Uterus (tissue), 4 donors: ENCODE measurements at regions of chr2 and their contacts with region 1.

Region 1: GRCh38 chr2:48589170-48589767 is 28.4 kb upstream of the GTF2A1L start:
- DNase-seq: peak; percentile 50 to 54
- H3K4me3 ChIP-seq: no peak overlapping the region
- H3K27ac ChIP-seq: peak overlapping the region in 1 of 2 donors; percentile 35
- H3K4me1 ChIP-seq: no peaks in the 10 kb centered on the region
- H3K27me3 ChIP-seq: no peaks in the 10 kb centered on the region
- CTCF ChIP-seq: peak; percentile 65 to 80 (median 69)
- POLR2A ChIP-seq: no peak

Region 2: DNA sequence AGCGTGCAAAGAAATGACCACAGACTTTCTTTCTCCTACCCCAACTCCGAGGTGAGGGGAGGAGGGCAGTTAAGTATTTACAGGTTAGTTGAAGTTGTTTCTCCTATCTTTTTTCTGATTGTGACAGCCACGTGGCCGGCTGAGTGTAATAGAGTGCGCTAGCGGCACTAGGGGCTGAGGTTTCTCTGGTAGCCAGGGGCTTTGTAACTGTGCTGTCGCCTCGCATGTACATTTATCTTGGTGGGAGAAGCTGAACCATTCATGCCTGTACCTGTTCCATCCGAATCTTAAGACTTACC is 273.4 kb before region 1 on chr2:
- intact Hi-C with region 1: no loop called
- DNase-seq: no peak
- H3K4me3 ChIP-seq: peak overlapping the region; percentile 71 to 90
- H3K27ac ChIP-seq: peak overlapping the region; percentile 94 to 95
- H3K4me1 ChIP-seq: peaks cover 0 to 7% of the 10 kb centered on the region in 2 donors
- H3K27me3 ChIP-seq: no peaks in the 10 kb centered on the region
- CTCF ChIP-seq: no peak
- POLR2A ChIP-seq: no peak

Region 3: DNA sequence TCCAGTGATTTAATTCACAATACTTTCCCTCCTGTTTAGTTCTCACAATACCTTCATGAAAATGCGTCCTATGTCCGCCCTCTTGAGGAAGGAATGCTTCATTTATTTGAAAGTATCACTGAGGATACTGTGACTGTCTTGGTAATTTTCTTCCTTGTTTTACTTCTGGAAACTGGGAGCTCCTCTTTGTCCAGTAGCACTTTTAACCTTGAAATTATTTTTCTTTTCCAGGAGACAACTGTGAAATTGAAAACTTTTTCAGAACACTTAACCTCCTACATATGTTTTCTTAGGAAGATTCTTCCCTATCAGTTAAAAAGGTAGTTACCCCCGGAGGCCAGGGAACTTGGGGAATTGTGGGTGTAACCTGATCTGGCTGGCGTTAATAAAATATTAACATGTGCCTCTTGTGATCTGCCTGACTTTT is 118.2 kb before region 1 on chr2:
- intact Hi-C with region 1: loop called (anchors 10 kb)
- DNase-seq: peak in 1 of 2 donors; percentile 40
- H3K4me3 ChIP-seq: no peak overlapping the region
- H3K27ac ChIP-seq: peak overlapping the region; percentile 64 to 73
- H3K4me1 ChIP-seq: peaks cover 8 to 12% of the 10 kb centered on the region in 2 donors
- H3K27me3 ChIP-seq: no peaks in the 10 kb centered on the region
- CTCF ChIP-seq: peak; percentile 68 to 86 (median 74)
- POLR2A ChIP-seq: no peak

Region 4: DNA sequence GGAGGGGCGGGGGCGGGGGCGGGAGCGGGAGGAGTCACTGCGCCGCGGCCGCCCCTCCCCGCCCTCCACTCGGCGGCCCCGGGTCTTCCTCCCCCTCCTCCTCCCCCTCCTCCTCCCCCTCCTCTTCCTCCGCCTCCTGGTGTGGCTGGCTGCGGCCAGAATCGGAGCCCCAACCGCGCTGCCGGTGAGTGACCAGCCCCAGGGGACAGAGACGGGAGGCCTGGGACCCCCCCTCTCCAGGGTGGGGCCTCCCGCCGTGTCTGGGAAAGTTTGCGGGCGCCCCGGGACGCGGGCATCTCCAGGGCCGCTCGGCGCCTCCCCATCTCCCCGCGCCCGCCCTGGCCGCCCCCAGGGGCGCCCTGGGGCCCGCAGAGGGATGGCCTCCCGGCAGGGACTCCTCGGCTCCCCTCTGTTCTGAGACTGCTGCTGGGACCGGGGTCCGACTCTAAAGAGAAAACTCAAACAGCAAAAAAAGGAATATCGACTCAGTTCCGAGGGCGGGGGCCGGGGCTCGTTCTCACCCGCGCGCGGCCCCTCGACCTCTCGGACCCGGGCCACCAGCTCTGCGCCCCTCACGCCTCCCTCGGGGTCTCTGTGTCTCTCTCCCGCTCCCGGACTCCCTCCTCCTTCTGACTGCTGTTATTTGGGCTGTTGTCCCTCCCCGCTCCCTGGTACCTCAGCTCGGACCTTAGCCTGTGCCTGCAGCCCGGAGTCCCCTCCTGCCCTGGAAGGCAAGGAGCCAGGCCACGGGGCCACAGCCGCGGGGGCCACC is 59.0 kb before region 1 on chr2 and contains the start of gene STON1:
- intact Hi-C with region 1: loop called (anchors 10 kb)
- DNase-seq: peak; percentile 72 to 74
- H3K4me3 ChIP-seq: peak within 1 kb of the TSS; percentile 92 to 96
- H3K27ac ChIP-seq: peak within 1 kb of the TSS; percentile 96 to 98
- H3K4me1 ChIP-seq: peaks cover 11 to 23% of the 10 kb centered on the region in 2 donors
- H3K27me3 ChIP-seq: no peaks in the 10 kb centered on the region
- CTCF ChIP-seq: peak in 2 of 4 experiments; percentile 24
- POLR2A ChIP-seq: peak in 1 of 2 donors; percentile 40
- total RNA-seq, gene STON1: 55.6 to 75.3 (median 65.8) TPM